Activated CD8-positive, alpha-beta memory T cell treated with anti-CD3 and anti-CD28 coated beads, Interleukin-2, amount 10 ng/mL, durations not matched to agents 7 days and 5 days (primary cell): ENCODE measurements at regions of chr2 and their contacts with region 1.

Region 1: GRCh38 chr2:96868555-96869280 is 1.2 kb downstream of the SEMA4C start:
- DNase-seq: peak; percentile 81
- ATAC-seq: peak; percentile 66
- H3K4me3 Mint-ChIP-seq: peak overlapping the region; percentile 69
- H3K27ac Mint-ChIP-seq: peak overlapping the region; percentile 74
- H3K4me1 Mint-ChIP-seq: peaks cover 32% of the 10 kb centered on the region
- H3K27me3 Mint-ChIP-seq: peaks cover 13% of the 10 kb centered on the region

Region 2: GRCh38 chr2:96839293-96839874 is 29.3 kb before region 1 on chr2:
- CTCF ChIA-PET with region 1: no interaction called
- DNase-seq: peak; percentile 88
- ATAC-seq: peak; percentile 91
- H3K4me3 Mint-ChIP-seq: no peak overlapping the region
- H3K27ac Mint-ChIP-seq: peak overlapping the region; percentile 81
- H3K4me1 Mint-ChIP-seq: peaks cover 22% of the 10 kb centered on the region
- H3K27me3 Mint-ChIP-seq: no peaks in the 10 kb centered on the region

Region 3: GRCh38 chr2:96951093-96951654 is 82.5 kb after region 1 on chr2:
- CTCF ChIA-PET with region 1: interaction called, 13 read pairs
- DNase-seq: peak; percentile 81
- ATAC-seq: peak; percentile 87
- H3K4me3 Mint-ChIP-seq: no peak overlapping the region
- H3K27ac Mint-ChIP-seq: no peak overlapping the region
- H3K4me1 Mint-ChIP-seq: peaks cover 26% of the 10 kb centered on the region
- H3K27me3 Mint-ChIP-seq: peaks cover 13% of the 10 kb centered on the region

Region 4: GRCh38 chr2:96960153-96960961 is 91.6 kb after region 1 on chr2:
- CTCF ChIA-PET with region 1: interaction called, 15 read pairs
- DNase-seq: peak; percentile 93
- ATAC-seq: peak; percentile 84
- H3K4me3 Mint-ChIP-seq: peak overlapping the region; percentile 29
- H3K27ac Mint-ChIP-seq: peak overlapping the region; percentile 95
- H3K4me1 Mint-ChIP-seq: peaks cover 50% of the 10 kb centered on the region
- H3K27me3 Mint-ChIP-seq: no peaks in the 10 kb centered on the region